Astrocyte of the cerebellum (primary cell): ENCODE measurements at regions of chr22 and their contacts with region 1.

Region 1: GRCh38 chr22:45526768-45527360 is 24.2 kb downstream of the FBLN1 start:
- DNase-seq: no peak
- H3K4me3 ChIP-seq: no peak overlapping the region
- CTCF ChIP-seq: no peak

Region 2: DNA sequence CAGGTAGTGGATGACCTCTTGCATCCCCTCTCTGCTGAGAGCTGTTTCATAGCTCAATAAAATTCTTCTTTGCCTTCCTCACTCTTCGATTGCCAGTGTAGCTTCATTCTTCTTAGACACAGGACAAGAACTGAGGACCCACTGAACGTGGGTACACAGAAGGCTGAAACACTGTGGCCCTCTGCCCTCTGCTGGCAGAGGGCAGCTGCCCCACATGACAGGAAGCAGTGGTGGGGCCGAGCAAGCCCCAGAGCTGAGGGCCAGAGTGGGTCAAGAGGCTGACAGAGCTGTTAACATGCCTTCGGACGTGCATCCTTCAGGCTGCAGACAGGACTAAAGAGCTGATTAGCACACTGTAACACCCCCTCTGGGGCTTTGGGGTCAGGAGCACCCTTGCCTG is 129.1 kb before region 1 on chr22:
- in situ Hi-C with region 1: no loop called
- DNase-seq: no peak
- H3K4me3 ChIP-seq: no peak overlapping the region
- CTCF ChIP-seq: no peak

Region 3: DNA sequence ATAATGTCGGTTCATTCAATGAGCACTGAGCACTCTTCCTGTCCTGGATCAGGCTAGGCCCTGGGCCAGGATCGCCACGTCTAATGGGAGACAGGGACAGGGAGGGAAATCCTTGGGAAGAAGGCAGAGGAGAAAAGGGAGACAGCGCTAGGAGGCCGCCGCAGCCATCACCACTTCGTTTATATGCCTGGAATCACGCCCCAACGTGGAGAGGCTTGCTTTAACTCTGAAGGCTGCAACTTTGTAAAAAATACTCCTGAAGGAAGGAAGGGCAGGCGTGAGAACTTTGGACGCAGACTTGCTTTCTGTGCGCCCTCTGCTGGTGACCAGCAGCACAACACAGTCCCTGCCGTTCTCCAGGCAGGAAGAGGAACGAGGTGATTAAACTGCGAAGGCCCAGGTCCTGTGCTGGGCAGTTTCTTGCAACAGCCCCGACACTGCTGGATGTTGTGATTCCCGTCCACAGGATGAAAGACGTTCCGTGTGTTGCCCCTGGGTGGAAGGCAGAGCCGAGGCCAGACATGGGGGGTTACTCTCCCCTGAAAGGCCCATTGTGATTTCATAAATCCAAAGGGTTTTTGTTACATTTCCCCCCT is 91.2 kb before region 1 on chr22:
- in situ Hi-C with region 1: loop called (anchors 5 kb)
- DNase-seq: peak; percentile 88
- H3K4me3 ChIP-seq: no peak overlapping the region
- CTCF ChIP-seq: peak; percentile 92

Region 4: GRCh38 chr22:45483918-45484499 is 42.9 kb before region 1 on chr22:
- in situ Hi-C with region 1: no loop called
- DNase-seq: no peak
- H3K4me3 ChIP-seq: no peak overlapping the region
- CTCF ChIP-seq: no peak